ENCODE measurements at regions of chr2 and their contacts with region 1.

Region 1: DNA sequence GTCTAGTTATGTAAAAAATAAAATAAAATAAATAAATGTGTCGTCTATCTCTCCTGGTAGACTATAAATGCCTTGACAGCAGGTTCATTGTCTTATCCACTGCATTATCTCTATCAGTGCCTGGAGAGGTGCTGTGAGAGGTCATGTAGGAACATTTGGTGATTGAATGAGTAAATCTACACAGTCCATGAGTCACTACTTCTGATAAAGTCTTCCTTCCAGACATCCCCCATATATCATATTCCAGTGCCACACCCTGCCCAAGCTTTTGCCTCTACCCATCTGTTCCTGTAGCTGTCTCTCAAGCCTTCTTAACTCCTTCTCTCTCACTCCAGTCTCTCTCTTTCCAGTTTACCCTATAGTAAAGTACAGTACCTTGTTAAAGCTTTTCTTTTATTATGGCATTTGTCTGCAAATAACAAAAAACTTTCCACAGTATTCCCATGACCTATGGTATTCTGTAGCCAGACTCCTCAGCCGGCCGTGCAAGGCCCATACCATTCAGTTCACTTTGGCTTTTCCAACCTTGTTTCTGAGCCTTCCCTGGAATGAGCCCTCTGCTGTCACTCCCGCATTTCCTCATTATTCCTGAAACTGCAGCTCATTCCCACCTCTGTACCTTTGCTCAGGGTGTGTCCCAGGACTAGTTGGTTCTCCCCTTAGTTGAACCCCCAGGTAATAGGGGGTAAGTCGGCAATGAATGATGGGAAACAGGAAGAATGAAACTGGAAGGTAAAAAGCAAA is 37.5 kb downstream of the ANXA4 start:
- DNase-seq: no peak
- ATAC-seq: no peak
- H3K4me3 ChIP-seq: no peak overlapping the region
- H3K4me3 Mint-ChIP-seq: no peak overlapping the region
- H3K27ac ChIP-seq: no peak overlapping the region
- H3K27ac Mint-ChIP-seq: no peak overlapping the region
- H3K4me1 ChIP-seq: peaks cover 12% of the 10 kb centered on the region in 2 experiments
- H3K4me1 Mint-ChIP-seq: peaks cover 17 to 18% (median 18%) of the 10 kb centered on the region in 3 donors
- H3K27me3 ChIP-seq: no peaks in the 10 kb centered on the region
- H3K27me3 Mint-ChIP-seq: no peaks in the 10 kb centered on the region

Region 2: GRCh38 chr2:69375494-69376353 is 403.7 kb before region 1 on chr2:
- CTCF ChIA-PET with region 1: no interaction called
- POLR2A ChIA-PET with region 1: no interaction called
- DNase-seq: peak in 1 of 35 experiments; percentile 54
- ATAC-seq: peak in 3 of 4 experiments; percentile 47 to 62 (median 52)
- H3K4me3 ChIP-seq: no peak overlapping the region
- H3K4me3 Mint-ChIP-seq: no peak overlapping the region
- H3K27ac ChIP-seq: no peak overlapping the region
- H3K27ac Mint-ChIP-seq: no peak overlapping the region
- H3K4me1 ChIP-seq: no peaks in the 10 kb centered on the region
- H3K4me1 Mint-ChIP-seq: peaks cover 22 to 29% (median 25%) of the 10 kb centered on the region in 3 donors
- H3K27me3 ChIP-seq: no peaks in the 10 kb centered on the region
- H3K27me3 Mint-ChIP-seq: no peaks in the 10 kb centered on the region

Region 3: DNA sequence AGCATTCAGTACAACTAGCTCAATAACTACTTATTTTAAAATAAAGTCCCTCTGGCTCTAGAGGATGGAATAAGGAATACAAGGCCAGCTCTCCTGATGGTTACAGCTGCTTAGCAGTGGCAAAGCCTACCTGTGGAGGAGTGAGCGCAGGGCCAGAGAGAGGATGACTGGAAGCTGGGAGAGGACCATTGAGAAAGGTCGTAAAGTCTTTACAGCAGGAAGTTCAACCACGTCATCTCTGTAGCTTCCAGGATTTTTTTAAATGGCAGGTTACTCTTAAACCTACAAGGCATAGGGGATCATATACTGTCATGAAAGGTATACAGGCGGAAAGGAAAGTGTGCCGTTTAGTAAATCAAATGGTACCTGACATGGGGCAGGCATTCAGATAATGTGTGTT is 11.2 kb before region 1 on chr2:
- CTCF ChIA-PET with region 1: no interaction called
- POLR2A ChIA-PET with region 1: interaction called, 3 to 13 read pairs
- DNase-seq: no peak
- ATAC-seq: no peak
- H3K4me3 ChIP-seq: no peak overlapping the region
- H3K4me3 Mint-ChIP-seq: no peak overlapping the region
- H3K27ac ChIP-seq: no peak overlapping the region
- H3K27ac Mint-ChIP-seq: no peak overlapping the region
- H3K4me1 ChIP-seq: peaks cover 4 to 18% of the 10 kb centered on the region in 2 experiments
- H3K4me1 Mint-ChIP-seq: peaks cover 14 to 58% (median 38%) of the 10 kb centered on the region in 3 donors
- H3K27me3 ChIP-seq: no peaks in the 10 kb centered on the region
- H3K27me3 Mint-ChIP-seq: no peaks in the 10 kb centered on the region

Region 4: GRCh38 chr2:69791045-69791444 is 11.6 kb after region 1 on chr2:
- CTCF ChIA-PET with region 1: no interaction called
- POLR2A ChIA-PET with region 1: interaction called in 1 of 2 experiments, 11 read pairs
- DNase-seq: no peak
- ATAC-seq: no peak
- H3K4me3 ChIP-seq: no peak overlapping the region
- H3K4me3 Mint-ChIP-seq: no peak overlapping the region
- H3K27ac ChIP-seq: no peak overlapping the region
- H3K27ac Mint-ChIP-seq: no peak overlapping the region
- H3K4me1 ChIP-seq: peaks cover 0 to 6% of the 10 kb centered on the region in 2 experiments
- H3K4me1 Mint-ChIP-seq: peaks cover 7 to 14% (median 14%) of the 10 kb centered on the region in 3 donors
- H3K27me3 ChIP-seq: no peaks in the 10 kb centered on the region
- H3K27me3 Mint-ChIP-seq: no peaks in the 10 kb centered on the region